ENCODE measurements at regions of chr2 and their contacts with region 1.

Region 1: GRCh38 chr2:6975988-6976387 is 58.8 kb downstream of the RNF144A start:
- DNase-seq: no peak
- ATAC-seq: no peak
- H3K4me3 ChIP-seq: no peak overlapping the region
- H3K4me3 Mint-ChIP-seq: no peak overlapping the region
- H3K27ac ChIP-seq: no peak overlapping the region
- H3K27ac Mint-ChIP-seq: no peak overlapping the region
- H3K4me1 ChIP-seq: no peaks in the 10 kb centered on the region
- H3K4me1 Mint-ChIP-seq: peaks cover 2 to 59% (median 35%) of the 10 kb centered on the region in 7 donors
- H3K27me3 ChIP-seq: no peaks in the 10 kb centered on the region
- H3K27me3 Mint-ChIP-seq: no peaks in the 10 kb centered on the region

Region 2: GRCh38 chr2:6602471-6602870 is 373.5 kb before region 1 on chr2:
- CTCF ChIA-PET with region 1: no interaction called
- POLR2A ChIA-PET with region 1: no interaction called
- intact Hi-C with region 1: no loop called
- DNase-seq: no peak
- ATAC-seq: no peak
- H3K4me3 ChIP-seq: no peak overlapping the region
- H3K4me3 Mint-ChIP-seq: no peak overlapping the region
- H3K27ac ChIP-seq: no peak overlapping the region
- H3K27ac Mint-ChIP-seq: no peak overlapping the region
- H3K4me1 ChIP-seq: no peaks in the 10 kb centered on the region
- H3K4me1 Mint-ChIP-seq: no peaks in the 10 kb centered on the region
- H3K27me3 ChIP-seq: no peaks in the 10 kb centered on the region
- H3K27me3 Mint-ChIP-seq: peaks cover 0 to 9% (median under 1%) of the 10 kb centered on the region in 5 donors

Region 3: GRCh38 chr2:6957910-6958615 is 17.9 kb before region 1 on chr2:
- CTCF ChIA-PET with region 1: no interaction called
- POLR2A ChIA-PET with region 1: interaction called, 3 read pairs
- intact Hi-C with region 1: loop called in 1 of 2 experiments (anchors 2 kb)
- DNase-seq: no peak
- ATAC-seq: no peak
- H3K4me3 ChIP-seq: no peak overlapping the region
- H3K4me3 Mint-ChIP-seq: no peak overlapping the region
- H3K27ac ChIP-seq: no peak overlapping the region
- H3K27ac Mint-ChIP-seq: peak overlapping the region in 5 of 9 donors; percentile 25 to 75 (median 40)
- H3K4me1 ChIP-seq: peaks cover 0 to 21% of the 10 kb centered on the region in 2 donors
- H3K4me1 Mint-ChIP-seq: peaks cover 10 to 93% (median 82%) of the 10 kb centered on the region in 7 donors
- H3K27me3 ChIP-seq: no peaks in the 10 kb centered on the region
- H3K27me3 Mint-ChIP-seq: no peaks in the 10 kb centered on the region

Measured in naive thymus-derived CD4-positive, alpha-beta T cell (primary cell).